SK-MEL-5 (cell line): ENCODE measurements at regions of chr4 and their contacts with region 1.

Region 1: DNA sequence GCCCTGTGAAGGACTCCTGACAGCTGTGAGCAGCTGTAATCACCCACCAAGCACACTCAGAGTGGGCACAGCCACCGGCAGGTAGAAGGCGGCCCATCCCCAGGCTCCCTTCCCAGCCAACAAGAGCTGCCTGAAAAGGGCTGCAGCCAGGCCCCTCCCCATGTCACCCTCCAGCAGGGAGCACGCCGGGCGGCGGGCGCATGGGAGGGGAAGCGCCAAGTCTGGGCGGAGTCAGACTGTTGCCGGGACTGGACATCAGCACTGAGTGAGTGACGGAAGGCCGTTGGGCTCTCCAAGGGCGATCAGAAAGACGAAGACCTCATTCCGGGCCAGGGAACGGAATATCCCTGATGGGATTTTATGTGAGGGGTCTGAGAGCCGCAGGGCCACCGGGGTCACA is 82.1 kb downstream of the PPP2R2C start:
- DNase-seq: no peak

Region 2: DNA sequence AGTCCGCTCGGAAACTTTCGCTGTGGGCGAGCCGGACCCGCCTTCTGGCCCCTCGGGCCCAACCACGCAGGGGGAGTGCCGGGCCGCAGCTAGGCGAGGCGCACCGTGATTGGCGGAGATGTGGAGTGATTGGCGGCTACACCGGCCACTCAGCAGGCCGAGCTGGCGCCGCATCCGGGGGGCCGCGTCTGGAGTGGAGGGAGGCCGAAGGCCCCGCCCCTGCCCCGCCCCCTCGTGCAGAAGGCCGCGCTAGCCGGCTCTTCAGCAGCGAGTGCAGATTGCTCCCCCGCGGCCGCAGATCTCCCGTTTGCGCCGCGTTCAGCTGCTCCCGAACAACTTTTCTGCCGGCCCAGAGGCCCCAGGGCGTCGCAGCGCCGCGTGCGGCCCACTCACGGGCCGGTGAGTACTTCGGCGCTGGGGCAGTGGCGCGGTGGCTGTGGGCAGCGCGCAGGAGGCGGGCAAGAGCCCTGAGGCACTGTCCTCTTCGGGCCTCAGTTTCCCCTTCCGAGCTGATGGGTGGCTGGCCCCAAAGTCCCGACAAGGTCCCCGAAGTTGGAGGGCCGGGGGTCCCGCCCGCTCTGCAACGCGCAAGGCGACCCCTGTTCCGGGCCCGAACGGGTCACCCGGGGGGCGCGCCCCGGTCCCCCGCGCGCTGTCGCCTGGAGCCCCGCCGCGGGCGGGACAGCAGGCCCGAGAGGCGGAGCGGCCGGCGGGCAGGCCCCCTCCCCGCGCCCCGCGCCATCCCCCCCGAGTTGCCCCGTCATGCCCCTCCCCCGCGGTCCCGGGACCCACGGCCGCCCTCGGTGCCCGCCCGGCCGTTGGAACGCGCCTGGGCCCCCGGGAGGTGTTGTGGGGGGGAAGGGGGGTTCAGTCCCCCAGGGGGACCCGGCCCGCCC is 120.5 kb before region 1 on chr4 and contains the start of gene WFS1:
- in situ Hi-C with region 1: loop called (anchors 25 kb)
- DNase-seq: peak; percentile 96
- total RNA-seq, gene WFS1: 10.9 and 11.4 TPM in 2 replicates